Naive thymus-derived CD4-positive, alpha-beta T cell (primary cell): ENCODE measurements at regions of chr12 and their contacts with region 1.

Region 1: DNA sequence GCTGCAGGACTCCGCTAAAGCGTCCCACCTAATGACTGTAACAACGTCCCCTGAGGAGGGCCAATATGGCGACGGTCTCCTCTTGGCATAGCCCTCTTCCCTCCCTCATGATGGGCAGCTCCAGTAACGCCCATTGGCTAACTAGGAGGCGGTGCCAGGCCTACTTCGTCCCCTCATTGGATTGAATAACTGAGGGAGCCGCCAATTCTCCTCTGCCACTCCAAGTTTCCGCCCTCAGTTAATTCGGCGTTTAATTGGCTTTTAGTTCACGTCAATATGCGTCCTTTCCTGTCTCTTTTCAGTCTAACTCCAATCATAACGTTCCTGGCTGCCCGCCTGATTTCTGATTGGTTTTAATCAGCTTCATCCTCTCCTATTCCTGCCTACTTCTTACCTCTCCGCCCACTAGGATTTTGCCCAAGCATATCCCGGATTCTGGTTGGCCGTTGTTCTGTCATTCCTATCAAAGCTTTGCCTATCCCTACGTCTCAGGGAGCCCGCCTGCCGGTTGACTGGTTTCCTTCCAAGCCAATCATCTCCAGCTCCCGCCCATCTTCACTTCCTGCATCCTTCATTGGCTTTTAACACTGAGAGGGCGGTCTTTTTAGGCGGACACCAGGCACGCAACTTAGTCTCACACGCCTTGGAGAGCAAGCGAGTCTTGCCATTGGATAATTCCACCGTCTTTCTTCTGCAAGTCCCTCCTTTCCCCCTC is 430 bp upstream of the SP1 start:
- DNase-seq: peak in 8 of 9 donors; percentile 54 to 100 (median 99)
- ATAC-seq: peak; percentile 85
- H3K4me3 ChIP-seq: peak overlapping the region; percentile 61
- H3K4me3 Mint-ChIP-seq: no peak overlapping the region
- H3K27ac ChIP-seq: peak overlapping the region; percentile 91
- H3K27ac Mint-ChIP-seq: no peak overlapping the region
- H3K4me1 ChIP-seq: peaks cover 37 to 40% of the 10 kb centered on the region in 2 donors
- H3K4me1 Mint-ChIP-seq: peaks cover 31 to 44% (median 37%) of the 10 kb centered on the region in 7 donors
- H3K27me3 ChIP-seq: no peaks in the 10 kb centered on the region
- H3K27me3 Mint-ChIP-seq: no peaks in the 10 kb centered on the region

Region 2: DNA sequence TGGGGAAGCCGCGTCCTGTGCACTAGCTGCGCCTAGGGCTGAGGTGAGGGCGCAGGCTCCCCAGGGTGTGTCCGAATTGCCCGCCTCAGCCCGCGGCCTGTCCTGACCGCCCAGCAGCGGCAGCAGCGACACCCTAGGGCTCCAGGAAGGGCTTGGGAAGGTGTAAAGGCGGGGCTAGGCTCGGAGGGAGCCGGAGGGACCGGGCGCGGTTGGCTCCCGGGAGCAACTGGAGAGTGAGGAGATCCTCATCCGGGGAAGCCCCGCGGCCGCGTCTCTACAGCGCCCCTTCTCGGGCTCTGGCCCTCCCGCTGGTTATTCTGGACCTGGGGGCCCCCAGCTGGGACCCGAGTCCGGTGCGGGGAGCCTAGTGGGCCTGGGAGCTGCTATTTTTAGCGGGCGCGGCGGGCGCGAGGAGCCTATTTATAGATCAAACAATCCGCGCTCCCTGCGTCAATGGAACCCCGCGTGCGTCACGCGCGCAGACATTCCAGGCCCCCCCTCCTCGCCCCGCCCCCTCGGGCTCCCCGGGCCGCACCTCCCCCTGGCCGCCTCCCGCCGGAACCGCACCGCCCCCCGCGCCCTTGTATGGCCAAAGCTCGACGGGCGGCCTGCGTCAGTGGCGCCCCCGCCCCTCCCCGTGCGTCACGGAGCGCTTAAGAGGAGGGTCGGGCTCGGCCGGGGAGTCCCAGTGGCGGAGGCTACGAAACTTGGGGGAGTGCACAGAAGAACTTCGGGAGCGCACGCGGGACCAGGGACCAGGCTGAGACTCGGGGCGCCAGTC is 1328.6 kb before region 1 on chr12 and contains the start of gene NR4A1:
- CTCF ChIA-PET with region 1: no interaction called
- POLR2A ChIA-PET with region 1: no interaction called
- intact Hi-C with region 1: loop called in 1 of 2 experiments (anchors 2 kb)
- DNase-seq: peak; percentile 98 to 100 (median 99)
- ATAC-seq: peak; percentile 96
- H3K4me3 ChIP-seq: peak within 1 kb of the TSS; percentile 71
- H3K4me3 Mint-ChIP-seq: peak within 1 kb of the TSS; percentile 90 to 98 (median 94)
- H3K27ac ChIP-seq: peak within 1 kb of the TSS; percentile 93
- H3K27ac Mint-ChIP-seq: peak within 1 kb of the TSS; percentile 59 to 100 (median 99)
- H3K4me1 ChIP-seq: peaks cover 21 to 22% of the 10 kb centered on the region in 2 donors
- H3K4me1 Mint-ChIP-seq: peaks cover 23 to 41% (median 37%) of the 10 kb centered on the region in 7 donors
- H3K27me3 ChIP-seq: no peaks in the 10 kb centered on the region
- H3K27me3 Mint-ChIP-seq: peaks cover 0 to 9% (median 0%) of the 10 kb centered on the region in 5 donors
- total RNA-seq, gene NR4A1: 0.89 to 279 (median 7.1) TPM

Region 3: GRCh38 chr12:53295070-53295890 is 84.3 kb before region 1 on chr12 and contains the start of gene PFDN5:
- CTCF ChIA-PET with region 1: no interaction called
- POLR2A ChIA-PET with region 1: interaction called, 9 read pairs
- intact Hi-C with region 1: loop called in 1 of 2 experiments (anchors 1 kb)
- DNase-seq: peak; percentile 71 to 94 (median 88)
- ATAC-seq: peak; percentile 95
- H3K4me3 ChIP-seq: peak within 1 kb of the TSS; percentile 85
- H3K4me3 Mint-ChIP-seq: peak within 1 kb of the TSS; percentile 91 to 100 (median 98)
- H3K27ac ChIP-seq: peak within 1 kb of the TSS; percentile 94
- H3K27ac Mint-ChIP-seq: peak within 1 kb of the TSS; percentile 96 to 99 (median 98)
- H3K4me1 ChIP-seq: peaks cover 24 to 28% of the 10 kb centered on the region in 2 donors
- H3K4me1 Mint-ChIP-seq: peaks cover 27 to 62% (median 37%) of the 10 kb centered on the region in 7 donors
- H3K27me3 ChIP-seq: no peaks in the 10 kb centered on the region
- H3K27me3 Mint-ChIP-seq: no peaks in the 10 kb centered on the region
- total RNA-seq, gene PFDN5: 323 to 785 (median 692) TPM

Region 4: GRCh38 chr12:53365245-53365904 is 14.2 kb before region 1 on chr12:
- CTCF ChIA-PET with region 1: interaction called, 13 read pairs
- POLR2A ChIA-PET with region 1: interaction called, 4 read pairs
- intact Hi-C with region 1: no loop called
- DNase-seq: no peak
- ATAC-seq: peak; percentile 75
- H3K4me3 ChIP-seq: no peak overlapping the region
- H3K4me3 Mint-ChIP-seq: peak overlapping the region in 4 of 10 donors; percentile 0 to 63 (median 34)
- H3K27ac ChIP-seq: no peak overlapping the region
- H3K27ac Mint-ChIP-seq: peak overlapping the region in 7 of 9 donors; percentile 56 to 91 (median 88)
- H3K4me1 ChIP-seq: peaks cover 2 to 3% of the 10 kb centered on the region in 2 donors
- H3K4me1 Mint-ChIP-seq: peaks cover 10 to 17% (median 15%) of the 10 kb centered on the region in 7 donors
- H3K27me3 ChIP-seq: no peaks in the 10 kb centered on the region
- H3K27me3 Mint-ChIP-seq: no peaks in the 10 kb centered on the region

Region 5: DNA sequence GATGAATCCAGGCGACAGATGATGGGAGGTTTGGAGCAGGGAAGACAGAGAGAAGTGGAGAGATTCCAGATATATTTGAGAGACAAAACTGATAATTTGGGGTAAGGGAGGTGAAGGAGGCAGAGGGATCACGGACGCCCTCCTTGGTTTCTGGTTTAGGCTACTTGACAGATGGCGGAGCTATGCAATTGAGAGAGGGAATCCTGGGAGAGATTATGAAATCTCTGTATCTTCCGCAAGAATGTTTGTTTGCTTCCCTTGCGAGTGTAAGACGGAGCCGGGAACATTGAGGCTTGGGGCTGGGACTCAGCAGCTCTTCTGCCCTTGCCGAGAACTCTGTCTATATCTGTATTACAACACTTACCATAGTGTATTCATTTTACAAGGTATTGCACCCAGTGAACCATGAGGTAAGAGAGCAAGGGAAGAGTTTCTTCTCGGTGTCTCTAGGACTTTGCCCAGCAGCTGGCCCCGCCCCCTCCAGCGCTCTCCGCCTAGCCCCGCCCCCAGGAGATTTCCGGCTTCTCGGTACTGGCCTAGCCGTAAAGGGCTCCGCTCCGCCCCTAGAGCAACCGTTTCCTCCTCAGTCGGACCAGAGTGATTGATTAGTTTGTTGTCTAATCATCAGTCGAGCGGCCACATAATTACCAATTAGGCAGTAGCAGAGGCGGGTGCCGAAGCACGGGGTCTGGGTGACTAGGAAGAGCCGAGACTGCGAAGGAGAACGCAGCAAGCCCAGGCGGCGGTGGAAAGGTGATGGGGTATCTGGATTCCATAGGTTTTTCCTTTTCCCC is 61.7 kb after region 1 on chr12 and contains the start of gene PRR13:
- CTCF ChIA-PET with region 1: no interaction called
- POLR2A ChIA-PET with region 1: interaction called, 9 read pairs
- intact Hi-C with region 1: loop called (anchors 1 kb)
- DNase-seq: peak; percentile 90 to 99 (median 96)
- ATAC-seq: peak; percentile 99
- H3K4me3 ChIP-seq: peak within 1 kb of the TSS; percentile 93
- H3K4me3 Mint-ChIP-seq: peak within 1 kb of the TSS; percentile 89 to 99 (median 96)
- H3K27ac ChIP-seq: peak within 1 kb of the TSS; percentile 92
- H3K27ac Mint-ChIP-seq: peak within 1 kb of the TSS; percentile 91 to 97 (median 97)
- H3K4me1 ChIP-seq: peaks cover 18 to 24% of the 10 kb centered on the region in 2 donors
- H3K4me1 Mint-ChIP-seq: peaks cover 30 to 52% (median 43%) of the 10 kb centered on the region in 7 donors
- H3K27me3 ChIP-seq: no peaks in the 10 kb centered on the region
- H3K27me3 Mint-ChIP-seq: no peaks in the 10 kb centered on the region
- total RNA-seq, gene PRR13: 147 to 215 (median 201) TPM

Region 6: GRCh38 chr12:53500776-53501614 is 121.4 kb after region 1 on chr12 and contains the start of gene TARBP2:
- CTCF ChIA-PET with region 1: interaction called, 5 read pairs
- POLR2A ChIA-PET with region 1: interaction called, 39 read pairs
- intact Hi-C with region 1: loop called (anchors 1 kb)
- DNase-seq: peak; percentile 87 to 99 (median 98)
- ATAC-seq: peak; percentile 87
- H3K4me3 ChIP-seq: peak within 1 kb of the TSS; percentile 84
- H3K4me3 Mint-ChIP-seq: peak within 1 kb of the TSS; percentile 86 to 96 (median 92)
- H3K27ac ChIP-seq: peak within 1 kb of the TSS; percentile 98
- H3K27ac Mint-ChIP-seq: peak within 1 kb of the TSS; percentile 87 to 100 (median 97)
- H3K4me1 ChIP-seq: peaks cover 24 to 27% of the 10 kb centered on the region in 2 donors
- H3K4me1 Mint-ChIP-seq: peaks cover 15 to 56% (median 43%) of the 10 kb centered on the region in 7 donors
- H3K27me3 ChIP-seq: no peaks in the 10 kb centered on the region
- H3K27me3 Mint-ChIP-seq: no peaks in the 10 kb centered on the region
- total RNA-seq, gene TARBP2: 25.1 to 45.2 (median 40.7) TPM

Region 7: DNA sequence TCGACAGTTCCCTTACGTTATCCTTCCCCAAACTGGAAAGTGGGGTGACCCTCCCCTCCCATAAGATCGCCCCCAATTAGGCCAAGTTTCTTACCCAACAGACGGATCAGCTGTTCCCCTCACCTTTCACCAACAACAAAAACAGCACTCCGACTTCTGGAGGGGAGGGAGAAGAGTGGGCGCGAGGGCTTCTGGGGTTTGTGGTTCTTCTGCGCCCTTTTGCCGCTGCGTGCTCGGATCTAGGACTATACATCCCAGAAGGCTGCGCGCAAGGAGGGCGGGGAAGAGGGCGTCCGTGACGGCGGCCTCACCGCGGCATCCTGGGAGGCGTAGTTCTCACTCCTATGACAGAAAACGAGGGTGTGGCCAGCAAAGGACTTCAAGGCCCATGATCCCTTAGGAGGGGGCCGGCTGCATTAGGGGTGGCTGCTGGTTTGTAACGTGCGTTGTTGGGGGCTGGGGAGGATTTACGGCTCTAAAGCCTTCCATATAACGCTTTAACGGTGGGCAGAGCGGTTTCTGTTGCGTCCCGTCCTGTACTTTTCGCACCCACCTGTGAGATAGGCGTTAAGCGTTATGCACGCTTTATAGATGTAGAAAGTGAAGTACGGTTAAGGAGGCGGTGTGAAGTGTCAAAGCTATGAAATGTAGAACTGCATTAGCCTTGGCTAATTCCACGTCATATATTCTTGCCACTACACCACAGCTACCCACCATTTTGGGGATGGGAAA is 347.9 kb after region 1 on chr12 and contains the start of gene CALCOCO1:
- CTCF ChIA-PET with region 1: no interaction called
- POLR2A ChIA-PET with region 1: no interaction called
- intact Hi-C with region 1: loop called in 1 of 2 experiments (anchors 1 kb)
- DNase-seq: peak; percentile 84 to 98 (median 95)
- ATAC-seq: peak; percentile 98
- H3K4me3 ChIP-seq: peak within 1 kb of the TSS; percentile 94
- H3K4me3 Mint-ChIP-seq: peak within 1 kb of the TSS; percentile 91 to 100 (median 94)
- H3K27ac ChIP-seq: peak within 1 kb of the TSS; percentile 73
- H3K27ac Mint-ChIP-seq: peak within 1 kb of the TSS; percentile 69 to 98 (median 91)
- H3K4me1 ChIP-seq: peaks cover 13 to 17% of the 10 kb centered on the region in 2 donors
- H3K4me1 Mint-ChIP-seq: peaks cover 10 to 41% (median 32%) of the 10 kb centered on the region in 7 donors
- H3K27me3 ChIP-seq: no peaks in the 10 kb centered on the region
- H3K27me3 Mint-ChIP-seq: peaks cover 0 to 13% (median 0%) of the 10 kb centered on the region in 5 donors
- total RNA-seq, gene CALCOCO1: 66.1 to 175 (median 137) TPM